ENCODE measurements at regions of chr9 and their contacts with region 1.

Region 1: GRCh38 chr9:98391867-98392266 is 136.4 kb upstream of the TBC1D2 start:
- DNase-seq: no peak
- H3K4me3 ChIP-seq: no peak overlapping the region
- H3K27ac ChIP-seq: no peak overlapping the region
- H3K4me1 ChIP-seq: no peaks in the 10 kb centered on the region
- H3K27me3 ChIP-seq: peaks cover 0 to 7% of the 10 kb centered on the region in 2 donors
- CTCF ChIP-seq: no peak
- POLR2A ChIP-seq: no peak

Region 2: GRCh38 chr9:98502360-98503325 is 110.8 kb after region 1 on chr9:
- intact Hi-C with region 1: loop called (anchors 2 kb)
- DNase-seq: no peak
- H3K4me3 ChIP-seq: no peak overlapping the region
- H3K27ac ChIP-seq: no peak overlapping the region
- H3K4me1 ChIP-seq: no peaks in the 10 kb centered on the region
- H3K27me3 ChIP-seq: no peaks in the 10 kb centered on the region
- CTCF ChIP-seq: no peak
- POLR2A ChIP-seq: no peak